ENCODE measurements at regions of chr17 and their contacts with region 1.

Region 1: GRCh38 chr17:44708401-44709181 is at the start of gene DBF4B:
- DNase-seq: peak; percentile 89
- H3K4me3 Mint-ChIP-seq: no peak within 1 kb of the TSS
- H3K27ac Mint-ChIP-seq: no peak within 1 kb of the TSS
- H3K4me1 Mint-ChIP-seq: peaks cover 8% of the 10 kb centered on the region
- H3K27me3 Mint-ChIP-seq: peaks cover 2% of the 10 kb centered on the region
- total RNA-seq, gene DBF4B: 26.2 to 32.9 TPM

Region 2: GRCh38 chr17:44533533-44534246 is 174.9 kb before region 1 on chr17:
- CTCF ChIA-PET with region 1: no interaction called
- POLR2A ChIA-PET with region 1: interaction called, 11 read pairs
- DNase-seq: peak; percentile 88
- H3K4me3 Mint-ChIP-seq: no peak overlapping the region
- H3K27ac Mint-ChIP-seq: no peak overlapping the region
- H3K4me1 Mint-ChIP-seq: peaks cover 7% of the 10 kb centered on the region
- H3K27me3 Mint-ChIP-seq: peaks cover 2% of the 10 kb centered on the region

Region 3: DNA sequence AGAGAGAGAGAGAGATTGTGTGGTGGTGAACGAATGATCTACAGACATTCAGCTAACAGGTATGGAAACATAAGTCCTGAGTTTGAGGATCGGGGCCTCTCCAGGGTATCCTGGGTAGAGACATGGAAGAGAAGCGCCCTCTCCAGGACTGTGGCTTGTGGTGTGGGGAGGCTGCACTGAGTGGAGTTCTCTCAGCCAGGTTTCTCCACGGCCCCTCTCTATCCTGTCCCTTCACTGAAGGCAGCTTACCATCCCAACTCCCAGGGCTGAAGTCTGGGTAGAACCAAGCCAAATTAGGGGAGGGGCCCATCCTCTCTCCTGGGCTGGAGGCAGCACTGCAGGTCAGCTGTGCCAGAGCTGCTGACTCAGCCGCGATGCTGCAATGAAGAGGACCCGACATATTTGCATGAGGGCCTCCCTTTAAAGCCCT is 253.3 kb after region 1 on chr17:
- CTCF ChIA-PET with region 1: no interaction called
- POLR2A ChIA-PET with region 1: no interaction called
- DNase-seq: no peak
- H3K4me3 Mint-ChIP-seq: no peak overlapping the region
- H3K27ac Mint-ChIP-seq: no peak overlapping the region
- H3K4me1 Mint-ChIP-seq: peaks cover 6% of the 10 kb centered on the region
- H3K27me3 Mint-ChIP-seq: peaks cover 63% of the 10 kb centered on the region

Measured in activated CD4-positive, alpha-beta T cell treated with anti-CD3 and anti-CD28 coated beads, Interleukin-2, amount 10 ng/mL, durations not matched to agents 7 days and 5 days (primary cell).